Activated CD8-positive, alpha-beta T cell treated with anti-CD3 and anti-CD28 coated beads, Interleukin-2, amount 10 ng/mL, durations not matched to agents 7 days and 5 days (primary cell): ENCODE measurements at regions of chr1 and their contacts with region 1.

Region 1: DNA sequence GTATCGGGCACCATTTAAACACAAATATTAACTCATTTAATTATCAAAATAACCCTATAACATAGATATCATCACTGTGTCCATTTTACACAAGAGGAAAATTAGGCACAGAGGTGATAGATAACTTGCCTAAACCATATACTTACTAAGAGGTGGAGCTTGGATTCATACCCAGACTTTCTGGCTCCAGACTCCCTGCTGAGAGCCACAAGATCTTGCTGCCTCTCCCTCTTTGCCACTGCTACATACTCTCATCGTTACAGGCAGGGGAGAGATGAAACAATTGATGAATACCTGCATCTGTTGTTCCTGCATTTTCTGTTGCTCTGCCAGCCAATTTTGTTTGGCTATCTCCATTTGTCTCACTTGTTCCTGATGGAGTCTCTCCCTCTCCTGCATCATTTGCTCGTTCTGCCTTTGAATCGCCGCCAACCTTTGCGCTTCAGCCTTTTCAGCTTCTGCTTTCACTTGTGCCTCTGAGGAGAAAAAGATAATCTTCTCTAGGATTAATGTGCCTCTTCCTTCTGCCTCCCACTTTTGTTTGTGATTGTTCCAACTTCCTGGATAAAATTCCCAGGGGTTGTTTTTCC is 10.6 kb downstream of the GBP5 start:
- DNase-seq: no peak
- ATAC-seq: no peak
- H3K4me3 Mint-ChIP-seq: peak overlapping the region; percentile 65
- H3K27ac Mint-ChIP-seq: peak overlapping the region; percentile 40
- H3K4me1 Mint-ChIP-seq: peaks cover 79% of the 10 kb centered on the region
- H3K27me3 Mint-ChIP-seq: no peaks in the 10 kb centered on the region

Region 2: DNA sequence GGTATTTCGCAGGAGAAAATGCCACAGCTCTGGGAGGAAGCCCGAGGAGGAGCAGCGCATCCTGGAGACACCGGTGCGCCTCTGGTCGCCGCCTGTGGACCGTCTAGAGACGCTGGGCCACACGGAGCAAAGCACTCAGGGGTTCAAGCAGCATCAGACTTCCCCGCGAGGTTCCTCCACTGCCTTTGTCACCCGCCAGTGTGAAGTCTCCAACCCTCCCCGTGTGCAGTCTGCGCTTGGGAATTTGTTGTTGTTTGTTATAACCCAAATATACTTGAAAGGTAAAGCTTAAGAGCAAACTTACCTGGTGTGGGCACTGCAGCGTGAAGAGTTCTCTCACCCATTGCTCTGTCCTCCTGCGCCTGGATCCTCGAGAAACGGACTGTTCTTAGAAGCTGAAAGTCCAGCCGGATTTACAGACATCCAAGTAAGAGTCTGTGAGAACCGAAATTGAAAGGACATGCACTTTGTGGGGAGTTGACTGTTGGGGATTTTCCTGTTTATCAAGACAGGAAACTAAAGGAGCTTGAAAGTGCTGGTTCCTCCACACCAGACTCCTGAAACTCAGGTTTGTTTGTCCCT is 63.4 kb before region 1 on chr1 and contains the start of gene GBP4:
- CTCF ChIA-PET with region 1: interaction called, 12 read pairs
- POLR2A ChIA-PET with region 1: interaction called, 33 read pairs
- DNase-seq: peak; percentile 66
- ATAC-seq: peak; percentile 81
- H3K4me3 Mint-ChIP-seq: peak within 1 kb of the TSS; percentile 86
- H3K27ac Mint-ChIP-seq: peak within 1 kb of the TSS; percentile 91
- H3K4me1 Mint-ChIP-seq: peaks cover 62% of the 10 kb centered on the region
- H3K27me3 Mint-ChIP-seq: no peaks in the 10 kb centered on the region
- total RNA-seq, gene GBP4: 51.0 to 60.7 TPM

Region 3: GRCh38 chr1:89211035-89211634 is 50.9 kb before region 1 on chr1:
- CTCF ChIA-PET with region 1: no interaction called
- POLR2A ChIA-PET with region 1: no interaction called
- DNase-seq: no peak
- ATAC-seq: no peak
- H3K4me3 Mint-ChIP-seq: no peak overlapping the region
- H3K27ac Mint-ChIP-seq: no peak overlapping the region
- H3K4me1 Mint-ChIP-seq: no peaks in the 10 kb centered on the region
- H3K27me3 Mint-ChIP-seq: no peaks in the 10 kb centered on the region

Region 4: GRCh38 chr1:89381618-89382017 is 119.6 kb after region 1 on chr1:
- CTCF ChIA-PET with region 1: no interaction called
- POLR2A ChIA-PET with region 1: no interaction called
- DNase-seq: no peak
- ATAC-seq: no peak
- H3K4me3 Mint-ChIP-seq: no peak overlapping the region
- H3K27ac Mint-ChIP-seq: no peak overlapping the region
- H3K4me1 Mint-ChIP-seq: peaks cover 3% of the 10 kb centered on the region
- H3K27me3 Mint-ChIP-seq: no peaks in the 10 kb centered on the region